ENCODE measurements at regions of chr1 and their contacts with region 1.

Region 1: DNA sequence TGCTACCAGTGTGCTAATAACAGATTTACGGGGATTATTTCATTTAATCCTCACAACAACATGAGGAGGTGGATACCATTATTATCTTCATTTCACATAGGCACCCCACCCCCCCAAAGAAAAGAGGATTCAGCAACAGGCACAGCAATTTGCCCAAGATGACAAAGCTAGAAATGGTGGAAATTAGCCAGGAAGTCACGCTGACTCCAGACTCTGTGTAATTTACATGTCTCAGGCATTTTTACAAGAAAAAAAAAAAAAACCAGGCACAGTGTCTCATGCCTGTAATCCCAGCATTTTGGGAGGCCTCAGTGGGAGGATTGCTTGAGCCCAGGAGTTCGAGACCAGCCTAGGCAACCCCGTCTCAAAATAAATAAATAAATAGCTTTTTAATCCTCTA is 37.5 kb upstream of the PRDM2 start:
- DNase-seq: peak in 1 of 3 donors; percentile 16
- ATAC-seq: no peak
- H3K4me3 ChIP-seq: no peak overlapping the region
- H3K4me1 ChIP-seq: no peaks in the 10 kb centered on the region
- CTCF ChIP-seq: no peak

Region 2: DNA sequence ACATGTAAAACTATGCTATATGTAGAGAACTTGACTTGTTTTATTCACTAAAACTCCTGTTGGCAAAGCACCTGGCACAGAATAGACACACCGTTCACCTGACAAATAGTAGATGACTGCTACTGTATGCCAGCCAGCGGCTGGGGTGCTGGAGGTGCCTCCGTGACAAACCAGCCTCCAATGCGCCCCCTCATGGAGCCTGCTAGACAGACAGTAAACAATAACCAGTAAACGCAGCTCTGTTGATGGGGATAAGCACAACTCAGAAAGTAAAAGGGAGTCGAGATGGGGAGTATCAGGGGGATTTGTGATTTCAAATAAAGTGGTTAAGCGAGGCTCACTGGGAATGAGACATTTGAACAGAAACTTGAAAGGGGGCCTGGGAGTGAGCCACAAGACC is 144.7 kb after region 1 on chr1:
- intact Hi-C with region 1: loop called (anchors 10 kb)
- DNase-seq: peak in 2 of 3 donors; percentile 51 to 53
- ATAC-seq: peak; percentile 63
- H3K4me3 ChIP-seq: no peak overlapping the region
- H3K4me1 ChIP-seq: peaks cover 5% of the 10 kb centered on the region
- CTCF ChIP-seq: no peak

Region 3: DNA sequence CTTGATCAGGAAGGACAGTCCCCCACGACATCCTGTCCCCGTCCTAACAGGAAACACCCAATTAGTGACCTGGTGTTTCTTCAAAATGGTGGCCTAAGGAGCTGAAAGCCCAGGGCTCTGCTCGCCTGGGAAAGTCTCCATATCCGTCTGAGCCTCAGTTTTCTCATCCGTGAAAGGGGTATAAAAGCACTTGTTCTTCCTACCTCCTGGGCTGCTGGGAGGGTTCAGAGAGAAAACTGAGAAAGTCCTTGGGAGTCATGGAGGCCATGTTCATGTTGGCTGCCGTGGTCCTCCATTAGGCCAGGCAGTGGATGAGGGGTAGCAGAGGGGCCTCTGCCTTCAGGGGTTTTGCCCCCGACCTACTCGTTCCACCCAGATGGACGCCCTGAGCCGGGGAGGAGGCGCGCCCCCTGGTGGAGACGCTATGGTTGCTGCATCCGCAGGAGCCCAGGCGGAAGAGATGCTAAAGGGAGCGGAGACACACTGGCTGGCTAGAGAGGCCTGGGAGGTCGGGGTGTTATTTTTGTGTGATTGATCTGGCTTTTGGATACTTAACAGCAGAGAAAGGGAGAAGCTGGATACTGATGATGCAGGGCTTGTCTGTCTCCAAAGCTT is 151.0 kb after region 1 on chr1:
- intact Hi-C with region 1: loop called (anchors 10 kb)
- DNase-seq: no peak
- ATAC-seq: peak; percentile 19
- H3K4me3 ChIP-seq: no peak overlapping the region
- H3K4me1 ChIP-seq: no peaks in the 10 kb centered on the region
- CTCF ChIP-seq: peak; percentile 17